ENCODE measurements at regions of chr1 and their contacts with region 1.

Region 1: DNA sequence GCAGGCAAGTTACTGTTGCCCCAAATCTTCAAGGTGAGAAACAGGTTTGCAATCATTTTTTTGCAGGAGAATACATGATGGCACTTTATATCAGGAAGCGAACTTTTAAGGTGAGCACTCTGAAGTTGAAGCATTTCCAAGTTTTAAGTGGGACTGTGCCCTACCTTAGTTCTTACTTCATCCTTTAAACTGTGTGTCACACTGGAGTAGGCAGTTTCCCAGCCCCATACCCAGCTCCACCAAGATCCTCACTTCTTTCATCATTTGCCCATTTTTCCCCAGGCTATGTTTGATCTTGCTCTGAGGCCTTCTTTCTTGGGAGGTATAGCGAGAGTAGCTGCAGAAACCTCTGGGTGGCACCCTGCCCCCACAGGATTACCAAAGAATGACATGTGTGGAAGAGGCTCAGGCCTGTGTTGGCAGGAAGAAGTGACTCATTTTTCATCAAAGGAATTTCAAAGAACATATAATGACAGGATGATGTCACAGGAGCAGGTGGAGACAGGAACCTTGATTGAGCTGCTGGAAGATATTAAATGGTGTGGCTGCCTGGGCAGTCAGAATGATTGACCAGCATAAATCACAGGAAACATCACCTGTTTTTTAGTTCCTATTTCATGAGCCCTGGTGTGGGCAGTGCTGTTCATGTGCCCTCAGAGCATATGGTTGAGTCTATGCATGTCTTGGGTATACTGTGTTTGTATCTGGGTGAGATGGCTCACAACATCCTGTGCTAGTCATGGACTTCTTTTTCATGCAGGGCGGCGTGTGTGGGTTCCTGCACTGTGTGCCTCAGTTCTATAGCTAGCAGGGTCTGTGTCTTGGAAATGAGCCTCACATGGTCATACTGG is 20.8 kb upstream of the MACF1 start:
- DNase-seq: peak; percentile 91
- H3K4me3 Mint-ChIP-seq: peak overlapping the region; percentile 11
- H3K27ac Mint-ChIP-seq: peak overlapping the region; percentile 91
- H3K4me1 Mint-ChIP-seq: peaks cover 51% of the 10 kb centered on the region
- H3K27me3 Mint-ChIP-seq: no peaks in the 10 kb centered on the region

Region 2: DNA sequence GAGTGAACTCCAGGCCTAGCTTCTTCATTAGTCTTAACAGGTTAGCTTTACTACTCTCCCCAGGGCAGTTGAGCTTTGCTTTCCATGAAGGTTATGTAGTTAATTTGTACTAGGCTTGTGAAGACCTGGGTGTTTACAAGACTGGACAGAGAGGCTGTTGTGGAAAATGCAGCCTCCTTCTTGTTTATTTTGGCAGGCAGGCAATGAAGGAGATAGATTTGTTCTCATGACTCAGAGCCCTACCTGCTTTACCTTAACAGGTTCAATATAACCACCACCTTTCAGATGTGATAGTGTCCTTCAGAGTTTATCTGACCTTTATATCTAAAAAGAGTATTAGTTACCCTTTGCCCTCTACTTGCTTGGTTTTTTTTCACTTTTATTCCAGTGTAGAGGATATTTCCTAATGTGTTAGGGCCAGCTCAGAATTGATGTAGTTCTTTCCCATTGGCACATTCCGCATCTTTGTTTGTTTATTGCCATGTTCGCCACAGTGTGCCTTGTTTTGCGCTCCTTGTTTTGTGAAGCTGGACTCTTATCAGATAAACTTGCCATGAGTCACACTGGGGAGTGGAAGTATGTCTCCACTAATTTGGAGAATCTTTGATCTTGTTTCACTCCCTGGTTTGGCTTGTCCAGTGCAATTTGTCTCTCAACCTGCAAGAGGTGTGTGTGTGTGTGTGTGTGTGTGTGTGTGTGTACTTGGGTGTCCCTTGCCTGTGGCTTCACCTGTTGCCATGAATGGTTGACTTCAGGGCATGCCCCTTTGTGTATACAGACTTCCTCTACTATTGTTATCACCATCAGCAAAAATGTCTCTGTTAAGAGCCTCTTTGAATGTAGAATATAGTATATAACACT is 66.6 kb before region 1 on chr1:
- CTCF ChIA-PET with region 1: interaction called, 3 read pairs
- POLR2A ChIA-PET with region 1: no interaction called
- intact Hi-C with region 1: loop called (anchors 1 kb)
- DNase-seq: no peak
- H3K4me3 Mint-ChIP-seq: no peak overlapping the region
- H3K27ac Mint-ChIP-seq: no peak overlapping the region
- H3K4me1 Mint-ChIP-seq: peaks cover 3% of the 10 kb centered on the region
- H3K27me3 Mint-ChIP-seq: peaks cover 6% of the 10 kb centered on the region

Region 3: GRCh38 chr1:39214998-39215873 is 31.5 kb after region 1 on chr1:
- CTCF ChIA-PET with region 1: interaction called, 20 read pairs
- POLR2A ChIA-PET with region 1: interaction called, 8 read pairs
- intact Hi-C with region 1: no loop called
- DNase-seq: peak; percentile 65
- H3K4me3 Mint-ChIP-seq: peak overlapping the region; percentile 88
- H3K27ac Mint-ChIP-seq: peak overlapping the region; percentile 88
- H3K4me1 Mint-ChIP-seq: peaks cover 54% of the 10 kb centered on the region
- H3K27me3 Mint-ChIP-seq: no peaks in the 10 kb centered on the region

Region 4: GRCh38 chr1:39258146-39258924 is 74.6 kb after region 1 on chr1:
- CTCF ChIA-PET with region 1: interaction called, 75 read pairs
- POLR2A ChIA-PET with region 1: interaction called, 3 read pairs
- intact Hi-C with region 1: no loop called
- DNase-seq: peak; percentile 74
- H3K4me3 Mint-ChIP-seq: no peak overlapping the region
- H3K27ac Mint-ChIP-seq: peak overlapping the region; percentile 56
- H3K4me1 Mint-ChIP-seq: peaks cover 44% of the 10 kb centered on the region
- H3K27me3 Mint-ChIP-seq: no peaks in the 10 kb centered on the region

Measured in activated CD4-positive, alpha-beta memory T cell treated with anti-CD3 and anti-CD28 coated beads for 36 hours (primary cell).